OCI-LY7 (cell line): ENCODE measurements at regions of chr11 and their contacts with region 1.

Region 1: GRCh38 chr11:9633679-9634078 is 30.2 kb upstream of the SWAP70 start:
- DNase-seq: no peak
- H3K4me3 ChIP-seq: no peak overlapping the region
- H3K27ac ChIP-seq: no peak overlapping the region
- H3K4me1 ChIP-seq: peaks cover 7% of the 10 kb centered on the region
- CTCF ChIP-seq: no peak

Region 2: DNA sequence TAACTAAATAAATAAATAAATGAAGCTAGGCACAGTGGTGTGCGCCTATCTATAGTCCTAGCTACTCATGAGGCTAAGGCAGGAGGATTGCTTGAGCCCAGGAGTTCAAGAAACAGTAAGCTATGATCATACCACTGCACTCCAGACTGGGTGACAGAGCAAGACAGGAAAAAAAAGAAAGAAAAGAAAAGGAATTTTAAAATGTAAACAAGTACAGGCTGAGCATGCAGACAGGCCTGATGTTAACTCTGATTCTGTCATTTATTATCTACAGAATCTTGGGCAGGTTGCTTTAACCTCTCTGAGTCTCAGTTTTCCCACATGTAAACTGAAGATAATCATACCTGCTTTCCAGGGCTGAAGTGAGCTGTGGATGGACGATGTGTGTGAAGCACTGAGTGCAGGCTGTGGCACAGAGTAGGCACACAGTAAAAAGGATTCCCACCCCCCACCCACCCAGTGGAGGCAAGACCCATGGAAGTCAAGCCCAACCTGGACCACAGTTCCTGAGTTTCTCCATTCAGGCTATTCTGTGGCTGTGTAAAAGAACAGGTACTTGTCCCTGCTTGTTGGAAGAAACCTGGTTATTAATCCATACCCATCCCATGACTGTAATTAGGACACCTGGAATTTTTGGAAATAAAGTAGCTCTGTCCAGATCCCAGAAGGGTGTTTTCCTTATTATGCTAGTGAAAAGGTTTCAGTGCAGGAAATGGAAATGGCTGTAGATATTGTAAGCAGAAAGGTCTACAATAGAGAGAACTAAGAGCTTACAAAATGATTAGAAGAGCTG is 523.5 kb before region 1 on chr11:
- CTCF ChIA-PET with region 1: no interaction called
- POLR2A ChIA-PET with region 1: no interaction called
- intact Hi-C with region 1: no loop called
- DNase-seq: no peak
- H3K4me3 ChIP-seq: no peak overlapping the region
- H3K27ac ChIP-seq: no peak overlapping the region
- H3K4me1 ChIP-seq: no peaks in the 10 kb centered on the region
- CTCF ChIP-seq: no peak

Region 3: GRCh38 chr11:9619753-9620365 is 13.8 kb before region 1 on chr11:
- CTCF ChIA-PET with region 1: no interaction called
- POLR2A ChIA-PET with region 1: interaction called, 28 read pairs
- intact Hi-C with region 1: no loop called
- DNase-seq: no peak
- H3K4me3 ChIP-seq: peak overlapping the region; percentile 7
- H3K27ac ChIP-seq: peak overlapping the region; percentile 55
- H3K4me1 ChIP-seq: peaks cover 64% of the 10 kb centered on the region
- CTCF ChIP-seq: no peak

Region 4: GRCh38 chr11:9914064-9914463 is 280.4 kb after region 1 on chr11:
- CTCF ChIA-PET with region 1: no interaction called
- POLR2A ChIA-PET with region 1: no interaction called
- intact Hi-C with region 1: no loop called
- DNase-seq: no peak
- H3K4me3 ChIP-seq: no peak overlapping the region
- H3K27ac ChIP-seq: no peak overlapping the region
- H3K4me1 ChIP-seq: no peaks in the 10 kb centered on the region
- CTCF ChIP-seq: no peak

Region 5: GRCh38 chr11:10044618-10045017 is 410.9 kb after region 1 on chr11:
- CTCF ChIA-PET with region 1: no interaction called
- POLR2A ChIA-PET with region 1: no interaction called
- intact Hi-C with region 1: no loop called
- DNase-seq: peak; percentile 21
- H3K4me3 ChIP-seq: no peak overlapping the region
- H3K27ac ChIP-seq: no peak overlapping the region
- H3K4me1 ChIP-seq: no peaks in the 10 kb centered on the region
- CTCF ChIP-seq: no peak